Aorta (tissue), 5 donors: ENCODE measurements at regions of chr7 and their contacts with region 1.

Region 1: DNA sequence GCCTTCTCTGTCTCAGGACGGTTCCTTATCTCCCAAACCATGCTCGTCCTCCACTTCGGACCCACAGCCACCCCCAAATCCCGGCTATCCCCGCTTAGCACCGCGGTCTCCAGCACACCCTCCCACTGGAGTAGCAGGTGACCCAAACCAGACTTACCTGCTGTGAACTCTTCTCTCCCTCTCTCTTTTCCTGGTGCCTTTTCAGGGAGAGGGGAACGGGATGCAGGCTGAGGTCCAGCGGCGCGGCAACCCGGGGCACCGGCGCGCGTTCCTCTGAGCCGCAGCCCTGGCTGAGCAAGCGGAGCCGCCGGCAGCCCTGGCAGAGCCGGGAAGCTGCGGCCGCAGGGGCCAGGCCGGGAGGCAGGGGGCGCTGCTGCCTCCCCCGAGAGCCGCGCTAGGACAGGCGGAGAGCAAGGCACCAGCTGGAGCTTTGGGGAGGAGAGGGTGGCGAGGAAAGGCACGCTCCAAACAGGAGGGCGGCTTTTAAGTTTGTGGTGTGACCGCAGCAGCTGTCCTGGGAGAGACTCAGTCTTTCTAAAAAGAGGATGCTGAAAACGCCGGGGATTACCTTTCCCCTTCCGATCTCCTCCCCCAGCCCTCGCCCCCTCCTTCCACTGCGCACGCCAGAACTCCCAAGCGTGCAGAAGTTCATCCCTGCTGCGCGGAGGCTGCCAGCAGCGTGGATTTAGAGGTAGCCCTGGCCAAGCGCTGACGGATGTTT is at the start of gene SEMA3D:
- DNase-seq: peak; percentile 83 to 92
- ATAC-seq: peak; percentile 93
- H3K4me3 ChIP-seq: peak within 1 kb of the TSS; percentile 52 to 76
- H3K27ac ChIP-seq: peak within 1 kb of the TSS; percentile 86 to 90
- H3K4me1 ChIP-seq: no peaks in the 10 kb centered on the region
- H3K27me3 ChIP-seq: no peaks in the 10 kb centered on the region
- total RNA-seq, gene SEMA3D: 30.8 to 50.7 TPM

Region 2: DNA sequence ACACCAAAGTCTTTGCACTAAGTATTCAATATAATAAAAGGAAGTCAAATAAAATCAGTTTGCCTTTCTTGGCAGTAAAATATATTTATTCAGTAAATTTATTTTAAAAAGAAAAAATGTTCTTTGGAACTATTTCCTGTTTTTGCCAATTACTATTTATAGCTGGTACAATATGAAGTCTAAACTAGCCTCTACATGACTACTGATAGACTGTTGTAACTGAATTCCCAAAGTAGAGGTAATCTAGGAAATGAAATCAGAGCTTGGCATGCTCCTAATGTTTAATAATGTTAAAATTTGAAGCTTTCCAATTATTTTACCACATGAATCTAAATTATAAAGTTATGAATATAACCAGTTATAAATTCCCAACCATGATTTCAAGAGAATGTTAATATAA is 385.3 kb before region 1 on chr7:
- intact Hi-C with region 1: no loop called
- DNase-seq: no peak
- ATAC-seq: no peak
- H3K4me3 ChIP-seq: no peak overlapping the region
- H3K27ac ChIP-seq: no peak overlapping the region
- H3K4me1 ChIP-seq: no peaks in the 10 kb centered on the region
- H3K27me3 ChIP-seq: no peaks in the 10 kb centered on the region

Region 3: GRCh38 chr7:84975586-84976185 is 211.0 kb before region 1 on chr7:
- intact Hi-C with region 1: no loop called
- DNase-seq: no peak
- ATAC-seq: no peak
- H3K4me3 ChIP-seq: no peak overlapping the region
- H3K27ac ChIP-seq: no peak overlapping the region
- H3K4me1 ChIP-seq: no peaks in the 10 kb centered on the region
- H3K27me3 ChIP-seq: no peaks in the 10 kb centered on the region

Region 4: DNA sequence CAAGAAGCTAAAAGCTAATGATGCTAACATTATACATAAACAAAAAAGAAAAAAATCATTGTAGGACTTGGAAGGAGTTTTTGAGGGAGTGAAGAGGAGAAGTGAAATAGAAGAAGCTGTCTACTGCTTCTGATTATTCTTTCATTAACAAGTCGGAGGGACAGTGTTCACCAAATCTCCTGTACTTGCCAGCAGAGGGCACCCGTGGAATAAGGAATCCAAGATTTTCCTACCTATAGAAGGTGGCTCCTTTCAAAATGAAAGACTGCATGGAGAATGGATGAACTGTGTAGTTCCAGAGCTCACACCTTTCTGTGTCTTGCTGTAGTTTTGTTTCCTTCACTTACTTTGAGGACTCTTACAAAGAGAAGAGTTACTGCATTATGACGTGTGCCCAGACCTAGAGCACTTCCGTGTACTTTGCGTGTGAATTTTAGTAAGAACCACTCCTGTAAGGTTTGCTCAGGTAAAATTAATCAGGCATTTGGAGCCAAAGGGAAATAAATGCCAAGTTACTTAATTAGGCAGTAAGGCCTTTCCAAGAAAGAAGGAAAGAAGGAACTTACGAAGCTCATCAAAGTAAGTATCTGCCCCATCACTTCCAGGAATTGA is 145.0 kb before region 1 on chr7:
- intact Hi-C with region 1: loop called (anchors 1 to 2 kb)
- DNase-seq: peak; percentile 68 to 84
- ATAC-seq: peak; percentile 74
- H3K4me3 ChIP-seq: no peak overlapping the region
- H3K27ac ChIP-seq: no peak overlapping the region
- H3K4me1 ChIP-seq: no peaks in the 10 kb centered on the region
- H3K27me3 ChIP-seq: no peaks in the 10 kb centered on the region

Region 5: DNA sequence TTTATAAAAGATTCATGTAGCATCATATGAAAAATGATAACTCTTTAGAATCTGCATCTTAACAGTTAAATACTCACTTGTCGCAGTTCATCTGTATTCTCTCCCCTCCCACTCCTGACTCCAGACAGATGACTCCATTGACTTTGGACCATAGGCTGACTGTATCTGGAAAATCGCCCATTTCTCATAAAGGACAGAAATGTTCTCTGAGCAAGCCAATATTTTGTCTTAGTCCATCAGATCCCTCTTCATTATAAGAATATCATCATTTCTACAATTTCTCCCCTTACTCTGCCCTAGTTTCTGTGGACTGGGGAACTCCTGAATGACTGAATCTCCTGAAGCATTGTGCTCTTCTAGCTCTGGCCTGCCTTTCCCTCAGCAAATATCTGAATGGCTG is 125.2 kb before region 1 on chr7:
- intact Hi-C with region 1: loop called in 1 of 2 experiments (anchors 5 kb)
- DNase-seq: no peak
- ATAC-seq: no peak
- H3K4me3 ChIP-seq: no peak overlapping the region
- H3K27ac ChIP-seq: no peak overlapping the region
- H3K4me1 ChIP-seq: peaks cover 0 to 11% of the 10 kb centered on the region in 2 donors
- H3K27me3 ChIP-seq: no peaks in the 10 kb centered on the region

Region 6: GRCh38 chr7:85094046-85094725 is 92.5 kb before region 1 on chr7:
- intact Hi-C with region 1: loop called in 1 of 2 experiments (anchors 5 kb)
- DNase-seq: peak in 1 of 2 donors; percentile 46
- ATAC-seq: peak; percentile 90
- H3K4me3 ChIP-seq: no peak overlapping the region
- H3K27ac ChIP-seq: peak overlapping the region in 1 of 2 donors; percentile 81
- H3K4me1 ChIP-seq: peaks cover 0 to 3% of the 10 kb centered on the region in 2 donors
- H3K27me3 ChIP-seq: no peaks in the 10 kb centered on the region

Region 7: GRCh38 chr7:85226361-85227085 is 39.8 kb after region 1 on chr7:
- intact Hi-C with region 1: no loop called
- DNase-seq: no peak
- ATAC-seq: no peak
- H3K4me3 ChIP-seq: no peak overlapping the region
- H3K27ac ChIP-seq: no peak overlapping the region
- H3K4me1 ChIP-seq: no peaks in the 10 kb centered on the region
- H3K27me3 ChIP-seq: no peaks in the 10 kb centered on the region

Region 8: GRCh38 chr7:85274454-85274853 is 87.8 kb after region 1 on chr7:
- intact Hi-C with region 1: no loop called
- DNase-seq: no peak
- ATAC-seq: no peak
- H3K4me3 ChIP-seq: no peak overlapping the region
- H3K27ac ChIP-seq: no peak overlapping the region
- H3K4me1 ChIP-seq: no peaks in the 10 kb centered on the region
- H3K27me3 ChIP-seq: no peaks in the 10 kb centered on the region

Region 9: DNA sequence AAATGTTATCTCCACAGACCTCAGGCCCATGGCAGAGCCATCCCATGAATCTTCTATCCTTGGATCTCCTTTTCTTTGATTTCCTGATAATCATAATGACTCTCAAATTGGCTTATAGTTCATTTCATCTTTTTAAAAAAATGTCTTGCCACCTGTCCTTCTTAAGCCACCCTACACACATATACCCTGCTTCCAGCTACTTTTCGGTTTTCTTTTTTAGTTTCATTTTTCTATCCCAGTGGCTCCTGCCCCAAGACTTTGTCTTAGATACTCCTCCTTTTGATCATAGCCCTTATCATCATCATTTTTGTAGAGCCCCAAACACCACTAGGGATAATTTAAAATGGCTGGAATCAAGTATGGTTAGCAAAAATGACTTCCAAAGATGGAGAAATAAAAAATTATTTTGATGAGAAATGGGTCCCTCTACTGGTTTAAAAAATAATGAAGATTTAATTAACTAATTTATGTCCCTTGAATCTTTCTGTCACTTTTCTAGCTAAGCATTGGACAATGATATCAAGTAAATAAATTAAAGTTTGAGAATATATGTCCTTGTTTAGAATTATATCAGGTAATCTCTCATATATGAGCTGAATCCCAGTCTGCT is 277.5 kb after region 1 on chr7:
- intact Hi-C with region 1: loop called in 1 of 2 experiments (anchors 10 kb)
- DNase-seq: no peak
- ATAC-seq: no peak
- H3K4me3 ChIP-seq: no peak overlapping the region
- H3K27ac ChIP-seq: no peak overlapping the region
- H3K4me1 ChIP-seq: no peaks in the 10 kb centered on the region
- H3K27me3 ChIP-seq: no peaks in the 10 kb centered on the region

Region 10: GRCh38 chr7:85554236-85555178 is 367.8 kb after region 1 on chr7:
- intact Hi-C with region 1: loop called in 1 of 2 experiments (anchors 10 kb)
- DNase-seq: no peak
- ATAC-seq: peak; percentile 86
- H3K4me3 ChIP-seq: no peak overlapping the region
- H3K27ac ChIP-seq: no peak overlapping the region
- H3K4me1 ChIP-seq: no peaks in the 10 kb centered on the region
- H3K27me3 ChIP-seq: no peaks in the 10 kb centered on the region